Activated CD4-positive, alpha-beta memory T cell treated with anti-CD3 and anti-CD28 coated beads, Interleukin-2, amount 10 ng/mL, durations not matched to agents 7 days and 5 days (primary cell): ENCODE measurements at regions of chr4 and their contacts with region 1.

Region 1: GRCh38 chr4:145180298-145181090 is at the start of gene OTUD4:
- DNase-seq: peak; percentile 96
- H3K4me3 Mint-ChIP-seq: peak within 1 kb of the TSS; percentile 87
- H3K27ac Mint-ChIP-seq: peak within 1 kb of the TSS; percentile 95
- H3K4me1 Mint-ChIP-seq: peaks cover 25% of the 10 kb centered on the region
- H3K27me3 Mint-ChIP-seq: no peaks in the 10 kb centered on the region
- total RNA-seq, gene OTUD4: 45.8 to 51.2 TPM

Region 2: GRCh38 chr4:145097821-145098674 is 82.4 kb before region 1 on chr4 and contains the starts of genes ABCE1 and ANAPC10:
- CTCF ChIA-PET with region 1: interaction called, 16 read pairs
- POLR2A ChIA-PET with region 1: interaction called, 85 read pairs
- DNase-seq: peak; percentile 96
- H3K4me3 Mint-ChIP-seq: peak within 1 kb of the TSS; percentile 85
- H3K27ac Mint-ChIP-seq: peak within 1 kb of the TSS; percentile 96
- H3K4me1 Mint-ChIP-seq: peaks cover 33% of the 10 kb centered on the region
- H3K27me3 Mint-ChIP-seq: no peaks in the 10 kb centered on the region
- total RNA-seq, gene ABCE1: 60.6 to 63.3 TPM
- total RNA-seq, gene ANAPC10: 22.4 to 28.4 TPM

Region 3: GRCh38 chr4:145125396-145125795 is 55.1 kb before region 1 on chr4:
- CTCF ChIA-PET with region 1: interaction called, 4 read pairs
- POLR2A ChIA-PET with region 1: interaction called, 37 read pairs
- DNase-seq: no peak
- H3K4me3 Mint-ChIP-seq: peak overlapping the region; percentile 67
- H3K27ac Mint-ChIP-seq: peak overlapping the region; percentile 98
- H3K4me1 Mint-ChIP-seq: peaks cover 41% of the 10 kb centered on the region
- H3K27me3 Mint-ChIP-seq: no peaks in the 10 kb centered on the region

Region 4: DNA sequence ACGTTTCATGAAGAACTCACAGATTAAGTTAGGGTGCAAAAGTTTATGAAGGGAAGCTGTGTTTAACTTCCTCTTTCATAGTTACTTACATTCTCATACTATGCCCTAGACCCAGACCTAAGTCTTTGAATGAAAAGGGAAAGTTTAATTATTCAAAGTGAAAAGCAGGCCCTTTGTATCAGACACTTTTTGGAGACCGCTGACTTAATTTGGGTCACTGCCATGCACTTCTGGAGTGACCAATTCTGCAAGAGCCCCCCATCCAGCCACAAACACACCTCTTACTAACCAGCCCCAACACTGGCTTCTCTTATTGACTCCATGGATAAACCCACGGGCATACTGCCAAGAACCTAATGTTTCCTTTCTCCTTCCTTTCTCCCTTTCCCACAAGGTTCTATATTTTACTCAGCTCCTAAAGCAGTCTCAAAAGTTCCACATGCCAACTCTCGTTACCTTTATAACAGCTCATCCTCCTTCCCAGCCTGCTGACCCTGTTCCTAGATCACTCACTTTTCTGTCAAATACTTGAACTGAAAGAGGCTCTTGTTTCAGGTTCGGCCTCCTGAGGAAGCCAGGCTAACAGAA is 47.9 kb before region 1 on chr4:
- CTCF ChIA-PET with region 1: no interaction called
- POLR2A ChIA-PET with region 1: interaction called, 37 read pairs
- DNase-seq: no peak
- H3K4me3 Mint-ChIP-seq: peak overlapping the region; percentile 26
- H3K27ac Mint-ChIP-seq: peak overlapping the region; percentile 70
- H3K4me1 Mint-ChIP-seq: peaks cover 74% of the 10 kb centered on the region
- H3K27me3 Mint-ChIP-seq: no peaks in the 10 kb centered on the region

Region 5: GRCh38 chr4:145168581-145169187 is 11.8 kb before region 1 on chr4:
- CTCF ChIA-PET with region 1: no interaction called
- POLR2A ChIA-PET with region 1: interaction called, 11 read pairs
- DNase-seq: no peak
- H3K4me3 Mint-ChIP-seq: no peak overlapping the region
- H3K27ac Mint-ChIP-seq: no peak overlapping the region
- H3K4me1 Mint-ChIP-seq: peaks cover 28% of the 10 kb centered on the region
- H3K27me3 Mint-ChIP-seq: no peaks in the 10 kb centered on the region

Region 6: GRCh38 chr4:145375416-145375815 is 194.9 kb after region 1 on chr4:
- CTCF ChIA-PET with region 1: no interaction called
- POLR2A ChIA-PET with region 1: no interaction called
- DNase-seq: no peak
- H3K4me3 Mint-ChIP-seq: no peak overlapping the region
- H3K27ac Mint-ChIP-seq: no peak overlapping the region
- H3K4me1 Mint-ChIP-seq: no peaks in the 10 kb centered on the region
- H3K27me3 Mint-ChIP-seq: no peaks in the 10 kb centered on the region